Ovary (tissue), 10 donors: ENCODE measurements at regions of chr3 and their contacts with region 1.

Region 1: GRCh38 chr3:183844606-183845005 is 19.2 kb upstream of the MAP6D1 start:
- DNase-seq: no peak
- H3K4me3 ChIP-seq: no peak overlapping the region
- H3K27ac ChIP-seq: no peak overlapping the region
- H3K4me1 ChIP-seq: no peaks in the 10 kb centered on the region
- H3K27me3 ChIP-seq: no peaks in the 10 kb centered on the region
- CTCF ChIP-seq: no peak
- EP300 ChIP-seq: no peak
- POLR2A ChIP-seq: no peak

Region 2: DNA sequence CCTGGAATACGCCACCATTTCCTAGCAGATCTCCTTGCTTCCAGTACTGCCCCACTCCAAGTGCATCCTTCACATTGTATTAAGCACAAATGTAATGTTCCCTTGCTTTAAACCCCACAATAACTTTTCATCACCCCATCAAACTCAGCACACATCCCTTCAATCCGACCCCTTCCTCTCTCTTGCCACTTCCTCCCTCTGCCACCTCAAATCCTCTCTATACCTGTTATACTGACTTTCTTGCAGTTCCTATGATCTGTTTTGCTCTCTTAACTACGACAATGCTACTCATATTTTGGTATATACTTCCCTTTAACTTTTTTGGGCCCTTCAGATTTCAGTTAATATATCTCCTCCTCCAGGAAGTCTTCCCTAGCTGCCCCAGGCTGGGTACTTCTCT is 26.0 kb after region 1 on chr3:
- intact Hi-C with region 1: loop called in 1 of 4 experiments (anchors 2 kb)
- DNase-seq: no peak
- H3K4me3 ChIP-seq: no peak overlapping the region
- H3K27ac ChIP-seq: no peak overlapping the region
- H3K4me1 ChIP-seq: peaks cover 1% of the 10 kb centered on the region
- H3K27me3 ChIP-seq: no peaks in the 10 kb centered on the region
- CTCF ChIP-seq: no peak
- EP300 ChIP-seq: no peak
- POLR2A ChIP-seq: no peak